ENCODE measurements at regions of chr4 and their contacts with region 1.

Region 1: GRCh38 chr4:54233277-54233696 is 4.2 kb downstream of the PDGFRA start:
- H3K4me3 ChIP-seq: peak overlapping the region; percentile 56
- H3K27ac ChIP-seq: peak overlapping the region; percentile 82; the same call in 1 of the 2 replicates
- H3K4me1 ChIP-seq: 0 out of 2 replicates have a peak, but pooled peaks cover 2% of the 10 kb centered on the region
- CTCF ChIP-seq: peak; percentile 83

Region 2: DNA sequence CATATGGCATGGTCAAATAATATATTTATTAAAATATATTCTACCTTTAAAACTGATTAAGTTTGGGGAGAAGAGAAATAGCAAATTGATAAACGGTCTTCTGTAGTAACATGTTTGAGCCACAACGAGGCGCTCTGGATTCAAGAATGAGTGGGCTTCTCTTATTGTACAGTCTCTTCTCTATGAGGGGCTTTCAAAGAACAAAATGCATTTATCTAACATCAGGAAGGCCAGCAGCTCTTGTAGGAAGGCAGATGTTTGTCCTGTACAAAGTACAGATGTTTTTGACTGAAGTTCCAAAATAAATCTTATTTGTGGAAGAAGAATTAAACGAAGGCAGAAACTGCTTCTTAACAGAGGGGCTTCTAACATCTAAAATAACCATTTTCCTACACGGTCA is 1217.6 kb before region 1 on chr4:
- CTCF ChIA-PET with region 1: interaction called, 45 read pairs
- POLR2A ChIA-PET with region 1: interaction called, 4 read pairs
- H3K4me3 ChIP-seq: no peak overlapping the region
- H3K27ac ChIP-seq: no peak overlapping the region
- H3K4me1 ChIP-seq: 0 out of 2 replicates have a peak, but pooled peaks cover 3% of the 10 kb centered on the region
- CTCF ChIP-seq: peak; percentile 37; the same call in 1 of the 2 replicates

Region 3: GRCh38 chr4:53967986-53968385 is 265.3 kb before region 1 on chr4:
- CTCF ChIA-PET with region 1: no interaction called
- POLR2A ChIA-PET with region 1: no interaction called
- H3K4me3 ChIP-seq: no peak overlapping the region
- H3K27ac ChIP-seq: no peak overlapping the region
- H3K4me1 ChIP-seq: no peaks in the 10 kb centered on the region
- CTCF ChIP-seq: no peak

Region 4: GRCh38 chr4:54217642-54218495 is 15.4 kb before region 1 on chr4:
- CTCF ChIA-PET with region 1: interaction called, 27 read pairs
- POLR2A ChIA-PET with region 1: interaction called, 4 read pairs
- H3K4me3 ChIP-seq: peak overlapping the region; percentile 45
- H3K27ac ChIP-seq: peak overlapping the region; percentile 46; the same call in 1 of the 2 replicates
- H3K4me1 ChIP-seq: no peaks in the 10 kb centered on the region
- CTCF ChIP-seq: peak; percentile 61